Activated CD4-positive, alpha-beta T cell treated with anti-CD3 and anti-CD28 coated beads for 36 hours (primary cell): ENCODE measurements at regions of chr16 and their contacts with region 1.

Region 1: DNA sequence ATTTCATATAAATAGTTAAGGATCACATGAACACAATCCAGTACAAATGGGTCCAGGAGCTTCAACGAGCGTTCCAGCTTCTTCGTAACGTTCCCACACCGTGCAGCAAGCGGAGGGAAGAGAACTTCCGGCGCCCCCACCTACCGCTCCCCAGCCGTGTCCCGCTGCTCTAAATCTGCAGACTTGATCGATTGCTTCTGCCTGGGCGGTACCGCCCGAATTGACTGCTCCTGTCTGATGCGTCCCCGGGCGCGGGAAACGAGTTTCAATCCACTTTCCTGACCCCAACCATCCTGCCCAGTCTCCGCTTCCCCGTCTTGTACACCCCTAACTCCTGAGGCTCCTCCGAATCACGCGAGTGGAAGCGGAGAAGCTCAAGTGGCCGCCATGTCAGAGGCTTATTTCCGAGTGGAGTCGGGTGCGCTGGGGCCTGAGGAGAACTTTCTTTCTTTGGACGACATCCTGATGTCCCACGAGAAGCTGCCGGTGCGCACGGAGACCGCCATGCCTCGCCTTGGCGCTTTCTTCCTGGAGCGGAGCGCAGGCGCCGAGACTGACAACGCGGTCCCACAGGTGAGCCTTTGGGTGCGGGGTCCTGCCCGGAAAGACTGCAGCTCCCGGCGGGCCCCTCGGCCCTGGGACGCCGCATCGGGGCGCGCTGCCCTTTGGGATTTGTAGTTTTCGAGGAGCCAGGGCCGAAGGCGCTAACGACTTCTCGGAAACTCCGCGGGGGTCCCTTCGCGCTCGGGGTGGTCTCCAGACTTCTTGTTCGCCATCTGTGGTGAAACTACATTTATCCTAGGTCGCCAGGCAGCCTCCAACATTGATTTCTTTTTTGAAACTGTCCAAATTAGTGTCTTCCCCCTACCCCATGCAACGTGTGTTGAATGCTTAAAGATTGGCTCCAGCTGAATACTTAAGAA is at the start of gene GINS3:
- DNase-seq: peak; percentile 93
- ATAC-seq: peak; percentile 96
- H3K4me3 Mint-ChIP-seq: peak within 1 kb of the TSS; percentile 100
- H3K27ac Mint-ChIP-seq: peak within 1 kb of the TSS; percentile 100
- H3K4me1 Mint-ChIP-seq: peaks cover 12% of the 10 kb centered on the region
- H3K27me3 Mint-ChIP-seq: no peaks in the 10 kb centered on the region
- total RNA-seq, gene GINS3: 20.2 to 23.0 TPM

Region 2: GRCh38 chr16:58025351-58026138 is 366.9 kb before region 1 on chr16 and contains the start of gene MMP15:
- CTCF ChIA-PET with region 1: no interaction called
- POLR2A ChIA-PET with region 1: no interaction called
- intact Hi-C with region 1: loop called in 1 of 2 experiments (anchors 10 kb)
- DNase-seq: peak; percentile 77
- ATAC-seq: peak; percentile 77
- H3K4me3 Mint-ChIP-seq: peak within 1 kb of the TSS; percentile 72
- H3K27ac Mint-ChIP-seq: peak within 1 kb of the TSS; percentile 75
- H3K4me1 Mint-ChIP-seq: peaks cover 10% of the 10 kb centered on the region
- H3K27me3 Mint-ChIP-seq: peaks cover 5% of the 10 kb centered on the region
- total RNA-seq, gene MMP15: 0.19 to 0.43 TPM

Region 3: GRCh38 chr16:58236231-58236690 is 156.2 kb before region 1 on chr16:
- CTCF ChIA-PET with region 1: no interaction called
- POLR2A ChIA-PET with region 1: no interaction called
- intact Hi-C with region 1: loop called in 1 of 2 experiments (anchors 1 kb)
- DNase-seq: peak; percentile 82
- ATAC-seq: peak; percentile 99
- H3K4me3 Mint-ChIP-seq: peak overlapping the region; percentile 69
- H3K27ac Mint-ChIP-seq: no peak overlapping the region
- H3K4me1 Mint-ChIP-seq: peaks cover 8% of the 10 kb centered on the region
- H3K27me3 Mint-ChIP-seq: peaks cover 20% of the 10 kb centered on the region

Region 4: DNA sequence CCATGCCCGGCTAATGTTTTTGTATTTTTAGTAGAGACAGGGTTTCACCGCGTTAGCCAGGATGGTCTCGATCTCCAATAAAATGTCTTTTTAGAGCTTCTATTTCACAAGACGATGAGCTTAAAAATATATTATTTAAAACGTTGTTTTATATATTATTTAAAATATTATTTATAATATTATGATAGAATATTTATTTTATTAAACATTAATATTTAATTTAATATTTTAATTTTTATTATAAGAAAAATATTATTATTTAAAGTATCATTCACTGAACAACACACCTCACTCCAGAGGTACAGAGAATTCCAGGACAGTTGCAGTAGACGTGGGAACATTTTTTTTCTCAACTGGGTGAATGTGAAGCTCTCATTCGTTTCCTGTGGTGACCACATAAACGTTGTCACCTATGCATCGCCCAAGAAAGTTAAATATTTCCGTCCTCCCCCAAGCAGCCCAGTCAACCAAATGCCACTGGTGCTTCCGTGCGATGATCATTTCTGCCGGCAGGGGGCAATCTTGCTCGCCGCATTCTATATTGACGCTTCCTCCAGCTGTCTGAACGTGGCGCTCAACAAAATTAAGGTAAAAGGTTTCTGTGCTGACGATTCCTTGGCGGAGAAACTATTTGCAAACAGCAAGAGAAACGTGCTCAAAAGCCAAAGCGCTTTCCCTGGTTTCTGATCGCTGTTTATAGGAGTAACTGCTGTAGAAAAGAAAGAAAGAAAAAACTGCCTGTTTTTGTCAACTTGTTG is 56.0 kb before region 1 on chr16:
- CTCF ChIA-PET with region 1: interaction called, 6 read pairs
- POLR2A ChIA-PET with region 1: interaction called, 4 read pairs
- intact Hi-C with region 1: loop called in 1 of 2 experiments (anchors 2 kb)
- DNase-seq: peak; percentile 92
- ATAC-seq: peak; percentile 95
- H3K4me3 Mint-ChIP-seq: no peak overlapping the region
- H3K27ac Mint-ChIP-seq: no peak overlapping the region
- H3K4me1 Mint-ChIP-seq: peaks cover 5% of the 10 kb centered on the region
- H3K27me3 Mint-ChIP-seq: peaks cover 4% of the 10 kb centered on the region

Region 5: DNA sequence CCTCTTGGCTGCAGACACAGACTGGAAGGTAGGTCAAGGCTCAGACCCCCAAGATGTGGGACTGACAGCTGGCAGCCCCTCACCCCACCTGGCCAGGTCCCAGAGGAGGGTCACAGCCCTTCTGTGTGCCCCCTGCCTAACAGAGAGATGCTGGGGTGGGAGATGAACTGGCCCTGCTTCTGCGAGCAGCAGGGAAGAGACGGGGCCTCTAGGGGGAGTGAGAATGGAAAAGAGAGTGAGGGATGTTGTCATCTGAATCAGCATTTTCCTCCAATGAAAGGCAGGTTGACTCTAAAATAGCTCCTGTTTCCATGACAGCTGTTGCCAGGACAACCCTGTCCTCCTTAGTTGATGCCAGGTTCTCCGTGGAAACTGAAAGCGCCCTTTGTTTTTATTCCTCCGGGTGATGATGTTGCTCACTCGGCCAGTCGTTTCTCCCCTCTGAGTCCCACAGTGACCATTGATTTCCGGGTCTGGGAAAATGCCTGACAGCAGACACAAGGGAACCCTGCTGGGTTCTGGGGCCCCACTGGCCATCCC is 102.6 kb after region 1 on chr16:
- CTCF ChIA-PET with region 1: interaction called, 4 read pairs
- POLR2A ChIA-PET with region 1: no interaction called
- intact Hi-C with region 1: loop called in 1 of 2 experiments (anchors 2 kb)
- DNase-seq: peak; percentile 91
- ATAC-seq: peak; percentile 76
- H3K4me3 Mint-ChIP-seq: peak overlapping the region; percentile 17
- H3K27ac Mint-ChIP-seq: peak overlapping the region; percentile 37
- H3K4me1 Mint-ChIP-seq: peaks cover 19% of the 10 kb centered on the region
- H3K27me3 Mint-ChIP-seq: no peaks in the 10 kb centered on the region

Region 6: DNA sequence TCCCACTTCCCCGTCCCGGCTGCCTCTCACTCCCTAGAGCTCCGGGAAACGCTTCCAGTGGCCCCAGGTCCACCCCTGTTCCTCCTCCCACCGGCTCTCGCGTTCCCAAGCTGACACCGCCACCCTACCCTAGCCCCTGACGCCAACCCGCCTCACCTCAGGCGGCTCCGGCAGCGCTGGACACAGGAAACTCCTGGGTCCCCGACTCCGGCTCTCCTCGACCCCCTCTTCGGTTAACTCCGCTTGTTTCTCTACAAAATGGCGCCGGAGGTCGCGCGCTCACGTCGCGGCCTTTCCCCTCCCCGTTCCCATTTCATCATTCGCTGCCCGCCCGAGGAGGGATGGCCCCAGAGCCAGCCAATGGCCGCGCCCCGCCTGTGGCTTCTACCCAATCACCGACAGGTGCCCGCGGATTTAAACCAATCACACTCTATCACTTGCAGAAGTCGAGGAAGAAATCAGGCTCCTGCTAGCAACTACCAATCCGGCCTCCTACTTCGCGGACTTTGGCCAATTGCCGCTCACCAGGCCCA is 237.2 kb after region 1 on chr16 and contains the start of gene CNOT1:
- CTCF ChIA-PET with region 1: no interaction called
- POLR2A ChIA-PET with region 1: no interaction called
- intact Hi-C with region 1: loop called (anchors 1 kb)
- DNase-seq: peak; percentile 99
- ATAC-seq: peak; percentile 89
- H3K4me3 Mint-ChIP-seq: peak within 1 kb of the TSS; percentile 100
- H3K27ac Mint-ChIP-seq: peak within 1 kb of the TSS; percentile 100
- H3K4me1 Mint-ChIP-seq: peaks cover 27% of the 10 kb centered on the region
- H3K27me3 Mint-ChIP-seq: no peaks in the 10 kb centered on the region
- total RNA-seq, gene CNOT1: 265 to 348 TPM

Region 7: GRCh38 chr16:58733671-58734458 is 341.4 kb after region 1 on chr16 and contains the start of gene GOT2:
- CTCF ChIA-PET with region 1: no interaction called
- POLR2A ChIA-PET with region 1: no interaction called
- intact Hi-C with region 1: loop called in 1 of 2 experiments (anchors 2 kb)
- DNase-seq: peak; percentile 90
- ATAC-seq: peak; percentile 92
- H3K4me3 Mint-ChIP-seq: peak within 1 kb of the TSS; percentile 92
- H3K27ac Mint-ChIP-seq: peak within 1 kb of the TSS; percentile 97
- H3K4me1 Mint-ChIP-seq: peaks cover 42% of the 10 kb centered on the region
- H3K27me3 Mint-ChIP-seq: no peaks in the 10 kb centered on the region
- total RNA-seq, gene GOT2: 128 to 133 TPM